Naive thymus-derived CD4-positive, alpha-beta T cell (primary cell): ENCODE measurements at regions of chr1 and their contacts with region 1.

Region 1: GRCh38 chr1:58903514-58904298 is 119.9 kb upstream of the JUN start:
- DNase-seq: peak; percentile 30 to 88 (median 49)
- ATAC-seq: peak; percentile 91
- H3K4me3 ChIP-seq: peak overlapping the region; percentile 60
- H3K4me3 Mint-ChIP-seq: peak overlapping the region; percentile 74 to 86 (median 80)
- H3K27ac ChIP-seq: peak overlapping the region; percentile 63
- H3K27ac Mint-ChIP-seq: peak overlapping the region in 8 of 9 donors; percentile 33 to 91 (median 74)
- H3K4me1 ChIP-seq: peaks cover 4% of the 10 kb centered on the region in 2 donors
- H3K4me1 Mint-ChIP-seq: peaks cover 5 to 38% (median 16%) of the 10 kb centered on the region in 7 donors
- H3K27me3 ChIP-seq: no peaks in the 10 kb centered on the region
- H3K27me3 Mint-ChIP-seq: no peaks in the 10 kb centered on the region

Region 2: GRCh38 chr1:58584082-58584895 is 319.4 kb before region 1 on chr1:
- CTCF ChIA-PET with region 1: no interaction called
- POLR2A ChIA-PET with region 1: no interaction called
- intact Hi-C with region 1: no loop called
- DNase-seq: no peak
- ATAC-seq: no peak
- H3K4me3 ChIP-seq: no peak overlapping the region
- H3K4me3 Mint-ChIP-seq: peak overlapping the region in 1 of 10 donors; percentile 23
- H3K27ac ChIP-seq: no peak overlapping the region
- H3K27ac Mint-ChIP-seq: peak overlapping the region in 1 of 9 donors; percentile 46
- H3K4me1 ChIP-seq: no peaks in the 10 kb centered on the region
- H3K4me1 Mint-ChIP-seq: peaks cover 0 to 19% (median 0%) of the 10 kb centered on the region in 7 donors
- H3K27me3 ChIP-seq: no peaks in the 10 kb centered on the region
- H3K27me3 Mint-ChIP-seq: peaks cover 28 to 59% (median 45%) of the 10 kb centered on the region in 5 donors

Region 3: GRCh38 chr1:58816072-58816746 is 87.5 kb before region 1 on chr1:
- CTCF ChIA-PET with region 1: no interaction called
- POLR2A ChIA-PET with region 1: no interaction called
- intact Hi-C with region 1: loop called (anchors 1 to 5 kb)
- DNase-seq: peak; percentile 66 to 84 (median 71)
- ATAC-seq: peak; percentile 88
- H3K4me3 ChIP-seq: peak overlapping the region; percentile 89
- H3K4me3 Mint-ChIP-seq: peak overlapping the region; percentile 88 to 94 (median 92)
- H3K27ac ChIP-seq: peak overlapping the region; percentile 77
- H3K27ac Mint-ChIP-seq: peak overlapping the region; percentile 77 to 95 (median 90)
- H3K4me1 ChIP-seq: peaks cover 27 to 34% of the 10 kb centered on the region in 2 donors
- H3K4me1 Mint-ChIP-seq: peaks cover 19 to 49% (median 41%) of the 10 kb centered on the region in 7 donors
- H3K27me3 ChIP-seq: no peaks in the 10 kb centered on the region
- H3K27me3 Mint-ChIP-seq: peaks cover 0 to 5% (median 0%) of the 10 kb centered on the region in 5 donors

Region 4: GRCh38 chr1:58857680-58858673 is 45.7 kb before region 1 on chr1:
- CTCF ChIA-PET with region 1: no interaction called
- POLR2A ChIA-PET with region 1: interaction called, 4 read pairs
- intact Hi-C with region 1: loop called (anchors 1 to 2 kb)
- DNase-seq: peak in 7 of 9 donors; percentile 28 to 61 (median 52)
- ATAC-seq: peak; percentile 76
- H3K4me3 ChIP-seq: no peak overlapping the region
- H3K4me3 Mint-ChIP-seq: peak overlapping the region in 9 of 10 donors; percentile 32 to 83 (median 51)
- H3K27ac ChIP-seq: peak overlapping the region; percentile 65
- H3K27ac Mint-ChIP-seq: peak overlapping the region; percentile 83 to 97 (median 92)
- H3K4me1 ChIP-seq: peaks cover 16 to 34% of the 10 kb centered on the region in 2 donors
- H3K4me1 Mint-ChIP-seq: peaks cover 34 to 64% (median 59%) of the 10 kb centered on the region in 7 donors
- H3K27me3 ChIP-seq: no peaks in the 10 kb centered on the region
- H3K27me3 Mint-ChIP-seq: no peaks in the 10 kb centered on the region

Region 5: DNA sequence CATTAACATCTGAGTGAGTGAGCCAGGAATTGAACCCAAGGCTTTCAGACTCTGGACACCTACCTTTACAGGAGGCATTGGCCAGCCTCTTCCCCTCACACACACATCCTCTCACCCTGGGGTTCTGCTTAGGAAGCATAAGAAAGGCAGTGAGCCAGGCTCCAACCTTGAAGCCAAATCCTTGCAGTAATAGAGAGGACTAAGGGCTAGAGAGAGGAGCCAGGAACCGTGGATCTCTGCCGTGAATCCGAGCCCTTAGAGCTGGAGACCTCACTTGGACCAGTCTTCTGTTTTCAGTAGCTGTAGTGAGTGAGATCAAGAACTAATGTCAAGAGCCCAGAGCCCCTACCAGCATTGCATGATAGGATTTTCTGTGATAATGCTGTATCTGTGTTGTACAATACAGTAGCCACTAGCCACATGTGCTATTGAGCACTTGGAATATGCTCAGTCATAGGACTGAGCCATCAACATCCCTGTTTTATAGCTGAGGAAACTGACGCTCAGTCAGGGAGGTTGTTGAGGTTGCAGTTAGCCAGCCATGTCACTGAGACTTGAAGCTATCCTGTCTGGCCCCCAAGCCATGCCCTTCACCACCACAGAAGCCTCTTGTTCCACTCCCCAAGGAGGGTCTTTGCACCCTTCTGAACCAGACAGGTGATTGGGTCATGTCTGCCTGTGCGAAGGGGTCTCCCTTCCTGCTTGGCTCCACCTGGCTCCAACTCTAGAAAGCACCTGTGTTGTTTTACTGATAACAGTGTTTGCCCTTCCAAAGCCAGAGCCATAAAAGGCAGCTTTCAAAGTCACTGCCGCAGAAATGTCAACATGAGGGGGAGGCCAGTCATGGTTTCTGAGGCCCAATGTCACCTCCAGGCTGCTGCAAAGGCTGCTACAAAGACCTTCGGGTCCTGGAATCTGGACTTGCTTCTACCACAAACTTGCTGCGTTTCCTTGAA is 18.7 kb before region 1 on chr1:
- CTCF ChIA-PET with region 1: no interaction called
- POLR2A ChIA-PET with region 1: no interaction called
- intact Hi-C with region 1: loop called in 1 of 2 experiments (anchors 1 kb)
- DNase-seq: peak in 3 of 9 donors; percentile 14 to 16 (median 16)
- ATAC-seq: no peak
- H3K4me3 ChIP-seq: no peak overlapping the region
- H3K4me3 Mint-ChIP-seq: peak overlapping the region in 8 of 10 donors; percentile 26 to 73 (median 64)
- H3K27ac ChIP-seq: peak overlapping the region; percentile 6
- H3K27ac Mint-ChIP-seq: peak overlapping the region; percentile 28 to 87 (median 80)
- H3K4me1 ChIP-seq: peaks cover 21 to 22% of the 10 kb centered on the region in 2 donors
- H3K4me1 Mint-ChIP-seq: peaks cover 34 to 62% (median 56%) of the 10 kb centered on the region in 7 donors
- H3K27me3 ChIP-seq: no peaks in the 10 kb centered on the region
- H3K27me3 Mint-ChIP-seq: no peaks in the 10 kb centered on the region

Region 6: DNA sequence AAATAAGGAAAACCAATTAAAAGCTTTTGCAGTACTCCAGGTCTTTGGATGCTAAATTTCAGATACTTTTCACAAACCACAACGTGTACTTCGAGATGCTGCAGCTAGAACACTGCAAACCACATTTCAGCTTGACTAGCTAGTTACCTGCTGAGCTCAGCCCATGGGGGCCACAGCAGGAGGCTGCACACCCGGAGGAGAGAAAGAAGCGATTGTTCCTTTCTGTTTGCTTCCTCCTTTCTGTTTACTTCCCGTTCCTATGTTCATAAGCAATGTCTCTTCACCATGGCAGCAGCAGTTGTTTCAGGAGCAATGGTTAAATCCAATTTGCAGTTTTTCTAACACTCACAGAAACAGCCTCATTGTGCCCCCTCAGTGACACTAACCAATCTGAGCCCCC is 167.6 kb after region 1 on chr1:
- CTCF ChIA-PET with region 1: no interaction called
- POLR2A ChIA-PET with region 1: no interaction called
- intact Hi-C with region 1: loop called in 1 of 2 experiments (anchors 5 kb)
- DNase-seq: peak in 5 of 9 donors; percentile 12 to 30 (median 22)
- ATAC-seq: peak; percentile 38
- H3K4me3 ChIP-seq: peak overlapping the region; percentile 21
- H3K4me3 Mint-ChIP-seq: peak overlapping the region; percentile 51 to 84 (median 70)
- H3K27ac ChIP-seq: no peak overlapping the region
- H3K27ac Mint-ChIP-seq: peak overlapping the region; percentile 41 to 91 (median 79)
- H3K4me1 ChIP-seq: peaks cover 21 to 26% of the 10 kb centered on the region in 2 donors
- H3K4me1 Mint-ChIP-seq: peaks cover 21 to 32% (median 27%) of the 10 kb centered on the region in 7 donors
- H3K27me3 ChIP-seq: no peaks in the 10 kb centered on the region
- H3K27me3 Mint-ChIP-seq: no peaks in the 10 kb centered on the region

Region 7: DNA sequence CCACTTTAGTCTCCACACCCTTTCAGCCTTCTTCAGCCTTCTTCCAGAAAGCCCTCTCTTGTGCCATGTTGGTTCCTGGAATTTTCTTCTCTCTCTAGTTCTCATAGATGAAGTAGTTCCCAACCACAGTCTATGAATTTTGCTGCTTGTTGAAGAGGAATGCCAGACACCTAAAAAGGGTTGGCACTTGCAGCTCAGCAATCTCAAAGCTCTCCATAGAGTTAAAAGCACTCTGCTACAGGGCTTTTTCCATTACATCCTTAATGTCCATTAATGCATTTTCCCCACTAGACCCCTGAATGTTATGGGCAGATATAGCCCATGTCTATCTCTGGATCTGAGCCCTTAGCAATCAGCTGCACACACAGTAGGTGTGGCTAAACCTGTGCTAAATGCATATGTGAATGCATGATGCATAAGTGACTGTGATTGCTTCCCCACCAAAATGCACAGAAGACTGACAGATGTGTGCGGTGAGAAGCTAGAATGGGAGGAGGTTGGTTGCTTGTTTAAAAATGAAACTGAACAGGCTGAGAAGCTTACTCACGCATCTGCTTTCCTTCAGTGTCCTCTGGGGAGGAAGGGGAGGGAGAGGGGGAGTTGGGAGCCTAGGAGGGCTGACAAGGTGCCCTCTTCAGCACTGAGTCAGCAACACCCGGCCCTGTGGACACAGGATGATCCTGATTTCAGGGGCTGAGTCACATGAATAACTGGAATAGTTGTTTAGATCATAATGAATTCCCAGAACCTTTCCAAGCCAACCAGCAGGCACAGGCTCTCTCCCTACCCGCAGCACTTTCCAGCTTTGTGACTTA is 247.1 kb after region 1 on chr1:
- CTCF ChIA-PET with region 1: no interaction called
- POLR2A ChIA-PET with region 1: no interaction called
- intact Hi-C with region 1: loop called in 1 of 2 experiments (anchors 5 kb)
- DNase-seq: peak in 1 of 9 donors; percentile 32
- ATAC-seq: no peak
- H3K4me3 ChIP-seq: no peak overlapping the region
- H3K4me3 Mint-ChIP-seq: peak overlapping the region in 2 of 10 donors; percentile 5 to 66
- H3K27ac ChIP-seq: no peak overlapping the region
- H3K27ac Mint-ChIP-seq: peak overlapping the region in 1 of 9 donors; percentile 44
- H3K4me1 ChIP-seq: peaks cover 0 to 5% of the 10 kb centered on the region in 2 donors
- H3K4me1 Mint-ChIP-seq: peaks cover 0 to 45% (median 13%) of the 10 kb centered on the region in 7 donors
- H3K27me3 ChIP-seq: no peaks in the 10 kb centered on the region
- H3K27me3 Mint-ChIP-seq: peaks cover 0 to 9% (median 5%) of the 10 kb centered on the region in 5 donors